ENCODE measurements at regions of chr6 and their contacts with region 1.

Region 1: DNA sequence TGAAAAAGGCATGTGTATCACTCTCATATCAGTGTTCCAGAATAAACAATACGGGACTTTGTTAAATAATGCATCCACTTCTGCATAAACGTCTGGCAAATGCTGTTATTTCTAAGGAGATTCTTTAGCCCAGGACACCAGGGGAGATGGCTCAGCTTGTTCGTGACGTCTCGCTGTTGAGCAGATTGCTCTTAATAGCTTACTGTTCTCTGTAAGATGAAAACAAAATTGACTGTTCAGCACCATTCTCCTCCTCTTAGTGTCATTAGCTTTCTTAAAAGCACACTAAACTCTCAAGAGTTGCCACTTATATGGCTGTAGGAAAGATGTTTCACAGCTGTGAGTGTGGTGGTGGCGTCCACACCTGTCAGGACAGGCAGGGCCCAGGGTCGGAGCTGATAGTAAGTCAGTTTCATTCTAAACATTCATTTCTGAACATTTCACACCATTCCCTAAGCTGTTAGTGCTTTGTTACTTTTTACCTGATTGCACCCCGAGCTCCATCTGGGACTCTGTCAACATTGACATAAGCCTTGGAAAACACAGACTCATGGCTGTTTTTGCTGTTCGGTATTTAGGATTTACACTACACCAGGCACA is 132.1 kb downstream of the ZDHHC14 start:
- DNase-seq: no peak
- ATAC-seq: no peak
- H3K4me3 ChIP-seq: no peak overlapping the region
- H3K4me3 Mint-ChIP-seq: no peak overlapping the region
- H3K27ac ChIP-seq: no peak overlapping the region
- H3K27ac Mint-ChIP-seq: no peak overlapping the region
- H3K4me1 ChIP-seq: peaks cover 0 to 10% of the 10 kb centered on the region in 2 experiments
- H3K4me1 Mint-ChIP-seq: peaks cover 10 to 21% (median 13%) of the 10 kb centered on the region in 3 donors
- H3K27me3 ChIP-seq: no peaks in the 10 kb centered on the region
- H3K27me3 Mint-ChIP-seq: no peaks in the 10 kb centered on the region

Region 2: GRCh38 chr6:157481865-157482249 is 31.2 kb before region 1 on chr6:
- CTCF ChIA-PET with region 1: no interaction called
- POLR2A ChIA-PET with region 1: interaction called in 1 of 2 experiments, 12 read pairs
- DNase-seq: no peak
- ATAC-seq: no peak
- H3K4me3 ChIP-seq: no peak overlapping the region
- H3K4me3 Mint-ChIP-seq: no peak overlapping the region
- H3K27ac ChIP-seq: no peak overlapping the region
- H3K27ac Mint-ChIP-seq: no peak overlapping the region
- H3K4me1 ChIP-seq: peaks cover 11 to 12% of the 10 kb centered on the region in 2 experiments
- H3K4me1 Mint-ChIP-seq: peaks cover 10% of the 10 kb centered on the region in 3 donors
- H3K27me3 ChIP-seq: no peaks in the 10 kb centered on the region
- H3K27me3 Mint-ChIP-seq: no peaks in the 10 kb centered on the region

Region 3: DNA sequence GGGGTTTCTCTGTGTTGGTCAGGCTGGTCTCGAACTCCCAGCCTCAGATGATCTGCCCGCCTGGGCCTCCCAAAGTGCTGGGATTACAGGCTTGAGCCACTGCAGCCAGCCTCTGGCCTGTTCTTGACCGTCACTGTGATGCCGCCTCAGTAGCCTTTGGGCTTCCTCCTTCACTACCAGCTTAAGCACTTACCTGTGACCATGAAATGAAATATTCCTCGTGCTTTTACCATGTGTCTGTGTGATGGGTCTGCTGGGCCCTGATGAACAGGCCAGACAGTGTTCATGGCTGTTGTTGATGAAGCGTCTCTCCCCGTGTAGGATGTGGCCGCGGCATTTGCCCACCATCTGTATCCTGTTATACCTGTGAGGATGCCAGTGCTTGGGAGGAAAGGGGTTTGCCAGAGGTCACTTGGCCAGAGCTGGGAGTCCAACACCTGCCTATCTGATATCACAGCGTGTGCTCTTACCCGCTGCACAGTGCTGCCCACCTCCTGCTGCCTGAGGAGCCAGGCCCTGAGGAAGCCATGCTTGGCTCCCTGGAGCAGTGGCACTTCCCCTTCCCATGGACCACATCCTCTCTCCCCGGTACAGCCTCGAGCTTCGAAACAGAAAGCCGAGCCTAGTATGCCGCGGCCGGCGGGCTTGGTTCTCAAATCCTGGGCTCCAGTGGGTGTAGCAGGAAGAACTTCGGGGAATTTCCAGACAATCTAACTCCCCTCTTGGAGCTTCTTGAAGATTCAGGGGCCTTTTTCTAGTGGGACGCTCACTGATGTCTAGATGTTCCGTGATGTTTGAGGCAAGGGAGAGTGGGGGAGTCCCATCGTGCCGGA is 35.7 kb after region 1 on chr6:
- CTCF ChIA-PET with region 1: no interaction called
- POLR2A ChIA-PET with region 1: no interaction called
- DNase-seq: peak in 1 of 35 experiments; percentile 26
- ATAC-seq: no peak
- H3K4me3 ChIP-seq: peak overlapping the region in 1 of 2 donors; percentile 25
- H3K4me3 Mint-ChIP-seq: peak overlapping the region in 1 of 3 donors; percentile 38
- H3K27ac ChIP-seq: no peak overlapping the region
- H3K27ac Mint-ChIP-seq: no peak overlapping the region
- H3K4me1 ChIP-seq: peaks cover 17 to 22% of the 10 kb centered on the region in 2 experiments
- H3K4me1 Mint-ChIP-seq: peaks cover 25 to 30% (median 28%) of the 10 kb centered on the region in 3 donors
- H3K27me3 ChIP-seq: peaks cover 0 to 6% of the 10 kb centered on the region in 2 experiments
- H3K27me3 Mint-ChIP-seq: peaks cover 7% of the 10 kb centered on the region in 2 donors